ENCODE measurements at regions of chr1 and their contacts with region 1.

Region 1: GRCh38 chr1:42173155-42173933 is 8.8 kb upstream of the GUCA2A start:
- DNase-seq: peak; percentile 58
- H3K4me3 Mint-ChIP-seq: no peak overlapping the region
- H3K27ac Mint-ChIP-seq: no peak overlapping the region
- H3K4me1 Mint-ChIP-seq: peaks cover 23% of the 10 kb centered on the region
- H3K27me3 Mint-ChIP-seq: no peaks in the 10 kb centered on the region
- CTCF ChIP-seq: peak; percentile 91

Region 2: DNA sequence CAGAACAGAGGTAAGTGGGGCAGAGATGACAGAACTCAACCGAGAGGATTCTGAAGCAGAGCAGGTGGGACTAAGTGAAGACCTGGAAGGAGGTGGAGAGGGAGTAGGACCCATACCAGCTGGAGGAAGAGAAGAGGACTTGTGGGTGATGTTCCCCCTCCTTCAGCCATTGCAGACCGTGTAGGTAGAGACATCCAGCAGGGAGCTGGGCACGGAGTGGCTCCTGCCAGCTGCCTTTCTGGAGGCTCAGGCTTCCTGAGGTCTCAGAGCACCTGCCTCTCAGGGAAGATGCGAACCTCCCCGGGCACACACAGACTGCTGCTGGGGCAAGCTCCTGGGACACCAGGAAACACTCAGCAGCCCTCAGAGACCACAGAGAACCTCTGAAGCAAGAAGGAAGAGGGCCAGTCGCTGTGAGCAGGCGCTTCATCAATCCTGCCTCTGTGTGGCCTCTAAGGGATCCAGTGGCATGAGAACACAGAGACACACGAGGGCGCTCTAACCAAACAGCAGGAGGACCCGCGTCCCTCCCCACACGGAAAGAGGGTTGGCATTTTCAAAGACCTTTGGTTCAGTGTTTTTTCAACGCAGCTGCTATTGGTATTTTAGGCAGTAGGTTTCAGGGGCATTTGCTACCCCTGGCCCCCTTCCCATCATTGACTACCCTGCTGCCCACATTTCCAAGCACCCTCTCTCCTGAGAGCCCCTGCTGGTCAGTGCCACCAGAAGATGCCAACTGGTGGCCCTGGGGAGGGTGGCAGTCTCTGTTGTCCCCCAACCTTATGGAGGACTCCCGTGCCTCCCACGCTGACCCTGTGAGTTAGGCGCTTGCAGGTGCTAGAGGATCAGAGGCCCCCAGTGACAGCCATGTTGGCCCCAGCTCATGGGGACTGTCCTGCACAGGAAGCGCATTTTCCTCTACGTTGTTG is 599.3 kb before region 1 on chr1:
- CTCF ChIA-PET with region 1: interaction called, 25 read pairs
- POLR2A ChIA-PET with region 1: no interaction called
- intact Hi-C with region 1: loop called (anchors 5 kb)
- DNase-seq: peak; percentile 82
- H3K4me3 Mint-ChIP-seq: no peak overlapping the region
- H3K27ac Mint-ChIP-seq: no peak overlapping the region
- H3K4me1 Mint-ChIP-seq: no peaks in the 10 kb centered on the region
- H3K27me3 Mint-ChIP-seq: no peaks in the 10 kb centered on the region
- CTCF ChIP-seq: peak; percentile 92

Region 3: DNA sequence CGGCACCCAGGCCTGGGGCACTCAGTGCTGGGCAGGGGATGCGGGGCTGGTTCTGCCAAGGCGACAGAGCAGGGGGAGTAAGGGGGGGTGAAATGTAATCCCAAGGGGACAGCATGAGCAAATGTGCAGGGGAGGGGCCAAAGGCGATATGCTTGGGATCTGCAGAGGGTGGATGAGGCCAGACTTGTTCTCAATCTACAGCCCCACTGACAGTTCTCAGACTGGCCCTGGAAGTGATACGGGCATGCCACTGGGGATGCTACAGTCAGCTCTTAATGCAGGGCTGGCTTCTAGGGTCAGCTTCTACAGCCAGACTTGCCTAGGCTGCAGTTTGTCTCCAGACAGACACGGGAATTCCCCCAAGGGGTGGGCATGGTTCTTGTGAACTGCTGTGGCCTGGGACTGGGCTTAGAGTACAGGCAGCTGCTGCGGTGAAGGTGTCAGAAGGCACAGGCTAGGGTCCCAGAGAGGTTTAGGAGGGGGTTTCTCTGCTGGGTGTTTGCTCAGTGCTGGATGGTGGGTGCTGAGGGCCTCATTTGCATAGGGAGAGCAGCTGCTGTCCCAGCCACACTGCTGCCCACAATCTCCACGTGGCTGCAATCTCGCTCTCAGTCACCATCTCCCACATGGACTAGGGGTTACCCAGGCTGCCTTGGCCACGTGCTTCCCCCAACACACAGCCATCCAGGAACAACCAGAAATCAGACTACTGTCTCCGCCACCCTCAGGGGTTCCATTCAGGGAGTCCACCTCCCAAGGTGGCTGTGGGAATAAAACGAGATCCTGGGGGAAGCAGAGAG is 444.7 kb before region 1 on chr1:
- CTCF ChIA-PET with region 1: no interaction called
- POLR2A ChIA-PET with region 1: no interaction called
- intact Hi-C with region 1: no loop called
- DNase-seq: no peak
- H3K4me3 Mint-ChIP-seq: no peak overlapping the region
- H3K27ac Mint-ChIP-seq: no peak overlapping the region
- H3K4me1 Mint-ChIP-seq: no peaks in the 10 kb centered on the region
- H3K27me3 Mint-ChIP-seq: peaks cover 2% of the 10 kb centered on the region
- CTCF ChIP-seq: no peak

Region 4: DNA sequence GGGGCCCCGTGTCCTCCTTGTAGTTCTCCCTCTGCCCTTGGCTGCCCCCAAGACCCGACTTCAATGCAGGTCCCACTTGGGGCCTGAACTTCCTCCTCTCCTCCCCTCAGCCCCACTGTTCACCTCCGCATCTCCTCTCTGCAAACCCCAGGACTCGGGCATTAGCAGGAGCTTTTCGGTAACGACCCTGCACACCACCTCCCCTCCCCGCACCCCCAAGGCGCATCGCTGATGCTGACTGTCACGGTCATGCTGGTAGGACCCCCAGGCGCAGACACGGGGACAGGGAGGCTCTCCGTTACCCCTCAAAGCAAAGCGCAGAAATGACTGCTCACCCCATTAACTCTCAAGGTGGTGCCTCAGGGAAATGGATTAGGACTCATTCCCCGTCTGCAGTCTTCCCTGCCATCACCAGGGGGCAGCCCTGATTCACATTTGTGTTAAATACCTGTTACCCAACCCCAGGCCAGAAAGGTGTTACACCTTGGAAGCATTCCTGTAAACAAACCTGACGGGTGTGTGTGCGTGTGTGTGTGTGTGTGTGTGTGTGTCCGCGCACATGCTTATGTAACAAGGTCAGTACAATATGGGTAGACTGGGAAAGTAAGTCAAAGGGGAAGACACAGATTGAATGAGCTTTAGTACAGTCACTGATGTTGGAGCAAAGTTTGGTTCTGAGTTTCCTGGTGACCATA is 26.6 kb before region 1 on chr1:
- CTCF ChIA-PET with region 1: interaction called, 87 read pairs
- POLR2A ChIA-PET with region 1: interaction called, 3 read pairs
- intact Hi-C with region 1: loop called (anchors 1 kb)
- DNase-seq: peak; percentile 86
- H3K4me3 Mint-ChIP-seq: no peak overlapping the region
- H3K27ac Mint-ChIP-seq: no peak overlapping the region
- H3K4me1 Mint-ChIP-seq: no peaks in the 10 kb centered on the region
- H3K27me3 Mint-ChIP-seq: peaks cover 26% of the 10 kb centered on the region
- CTCF ChIP-seq: peak; percentile 81

Region 5: GRCh38 chr1:42186152-42186551 is 12.8 kb after region 1 on chr1:
- CTCF ChIA-PET with region 1: interaction called, 33 read pairs
- POLR2A ChIA-PET with region 1: interaction called, 6 read pairs
- intact Hi-C with region 1: no loop called
- DNase-seq: no peak
- H3K4me3 Mint-ChIP-seq: no peak overlapping the region
- H3K27ac Mint-ChIP-seq: no peak overlapping the region
- H3K4me1 Mint-ChIP-seq: peaks cover 9% of the 10 kb centered on the region
- H3K27me3 Mint-ChIP-seq: no peaks in the 10 kb centered on the region
- CTCF ChIP-seq: no peak

Region 6: DNA sequence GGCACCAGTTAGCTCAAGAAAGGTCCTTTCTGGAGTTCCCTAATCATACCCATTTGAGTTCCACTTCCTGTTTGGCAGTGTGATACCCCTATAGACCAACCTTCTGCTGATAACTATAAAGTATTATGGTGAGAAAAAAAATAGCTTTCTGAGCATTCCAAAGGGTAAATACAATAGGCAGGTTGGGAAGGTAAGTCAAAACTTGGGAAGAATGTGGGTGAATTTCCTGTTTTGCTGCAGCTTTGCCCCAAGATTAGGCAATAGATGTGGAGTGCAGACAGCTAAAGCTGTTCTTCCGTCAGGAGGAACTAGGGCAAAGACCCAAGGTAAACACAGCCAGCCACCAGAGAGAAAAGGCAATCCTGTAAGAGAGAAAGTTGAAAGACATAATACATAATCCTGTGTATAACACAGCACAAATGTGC is 41.1 kb after region 1 on chr1:
- CTCF ChIA-PET with region 1: interaction called, 16 read pairs
- POLR2A ChIA-PET with region 1: interaction called, 4 read pairs
- intact Hi-C with region 1: no loop called
- DNase-seq: peak; percentile 90
- H3K4me3 Mint-ChIP-seq: peak overlapping the region; percentile 28
- H3K27ac Mint-ChIP-seq: peak overlapping the region; percentile 20
- H3K4me1 Mint-ChIP-seq: peaks cover 33% of the 10 kb centered on the region
- H3K27me3 Mint-ChIP-seq: no peaks in the 10 kb centered on the region
- CTCF ChIP-seq: no peak

Measured in MCF 10A (cell line).